ENCODE measurements at regions of chr16 and their contacts with region 1.

Region 1: GRCh38 chr16:81006814-81007696 is at the starts of genes CENPN and CMC2:
- DNase-seq: peak; percentile 96 to 99 (median 98)
- ATAC-seq: peak; percentile 77
- H3K4me3 ChIP-seq: peak within 1 kb of the TSS; percentile 79
- H3K4me3 Mint-ChIP-seq: peak within 1 kb of the TSS; percentile 90
- H3K27ac ChIP-seq: peak within 1 kb of the TSS; percentile 94 to 99
- H3K27ac Mint-ChIP-seq: peak within 1 kb of the TSS; percentile 99
- H3K4me1 ChIP-seq: peaks cover 39% of the 10 kb centered on the region
- H3K4me1 Mint-ChIP-seq: peaks cover 46% of the 10 kb centered on the region
- H3K27me3 ChIP-seq: no peaks in the 10 kb centered on the region
- H3K27me3 Mint-ChIP-seq: no peaks in the 10 kb centered on the region
- CTCF ChIP-seq: no peak
- total RNA-seq, gene CENPN: 8.7 to 9.7 TPM
- total RNA-seq, gene CMC2: 67.7 to 68.8 TPM

Region 2: DNA sequence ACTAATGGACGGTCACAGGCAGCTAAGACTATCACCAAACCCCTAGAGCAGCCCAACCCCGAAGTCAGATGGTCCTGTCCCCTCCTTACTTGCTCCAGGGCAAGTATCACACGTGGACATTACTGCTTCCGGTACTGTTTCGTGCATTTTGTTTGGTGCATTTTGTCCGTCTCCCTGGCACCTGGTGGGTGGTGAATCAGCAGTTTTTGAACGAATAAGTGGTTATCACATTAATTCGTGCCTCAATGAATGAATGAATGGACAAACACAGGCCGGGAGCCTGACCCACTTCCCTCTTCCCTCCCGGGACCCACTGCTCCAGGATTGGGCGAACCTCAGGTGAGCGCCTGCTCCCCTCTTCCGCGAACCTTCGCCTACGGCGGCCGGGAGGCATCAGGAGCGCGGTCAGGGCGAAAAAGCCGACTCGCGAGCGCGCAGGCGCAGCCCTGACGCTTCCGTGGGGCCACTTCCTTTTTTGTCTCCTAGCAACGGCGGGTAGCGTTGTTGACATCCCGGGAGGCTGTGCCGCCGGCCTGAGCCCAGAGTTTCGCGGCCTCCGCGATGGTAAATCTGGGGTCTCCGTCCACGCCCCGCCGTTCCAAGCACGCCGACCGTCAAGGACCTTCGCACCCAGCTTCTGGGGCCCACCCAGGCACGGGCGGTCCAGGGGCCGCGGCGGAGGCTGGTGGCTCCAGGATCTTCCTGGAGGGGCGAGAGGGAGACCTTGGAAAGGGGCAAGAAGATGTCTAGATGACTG is 466.4 kb before region 1 on chr16 and contains the start of gene DYNLRB2:
- CTCF ChIA-PET with region 1: no interaction called
- POLR2A ChIA-PET with region 1: no interaction called
- intact Hi-C with region 1: loop called in 1 of 2 experiments (anchors 10 kb)
- DNase-seq: peak; percentile 85 to 97 (median 89)
- ATAC-seq: peak; percentile 91
- H3K4me3 ChIP-seq: peak within 1 kb of the TSS; percentile 62
- H3K4me3 Mint-ChIP-seq: peak within 1 kb of the TSS; percentile 93
- H3K27ac ChIP-seq: peak within 1 kb of the TSS; percentile 36 to 62
- H3K27ac Mint-ChIP-seq: peak within 1 kb of the TSS; percentile 94
- H3K4me1 ChIP-seq: peaks cover 11% of the 10 kb centered on the region
- H3K4me1 Mint-ChIP-seq: peaks cover 17% of the 10 kb centered on the region
- H3K27me3 ChIP-seq: no peaks in the 10 kb centered on the region
- H3K27me3 Mint-ChIP-seq: peaks cover 4% of the 10 kb centered on the region
- CTCF ChIP-seq: no peak
- total RNA-seq, gene DYNLRB2: 0.31 TPM in 1 of 2 experiments, not detected in the other

Region 3: DNA sequence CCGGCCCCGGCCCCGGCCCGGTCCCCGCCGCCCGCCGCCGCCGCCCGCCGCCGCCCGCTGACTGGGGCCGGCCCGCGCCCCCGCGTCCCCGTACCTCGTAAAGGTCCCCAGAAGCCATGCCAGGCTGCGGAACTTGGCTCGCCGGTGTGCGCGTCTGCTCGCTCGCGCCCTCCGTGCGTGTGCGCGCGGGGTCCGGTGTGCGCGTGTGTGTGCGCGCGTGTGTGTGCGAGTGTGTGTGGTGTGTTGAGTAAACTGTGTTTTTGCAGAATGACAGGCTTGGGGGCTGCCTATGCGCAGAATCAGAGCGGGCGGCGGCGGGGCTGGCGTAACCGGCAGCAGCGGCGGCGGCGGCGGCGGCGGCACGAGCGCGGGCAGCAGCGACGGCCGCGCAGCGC is 203.0 kb before region 1 on chr16:
- CTCF ChIA-PET with region 1: no interaction called
- POLR2A ChIA-PET with region 1: no interaction called
- intact Hi-C with region 1: loop called in 1 of 2 experiments (anchors 10 kb)
- DNase-seq: peak; percentile 36 to 80 (median 59)
- ATAC-seq: peak; percentile 58
- H3K4me3 ChIP-seq: peak overlapping the region; percentile 57
- H3K4me3 Mint-ChIP-seq: peak overlapping the region; percentile 96
- H3K27ac ChIP-seq: no peak overlapping the region
- H3K27ac Mint-ChIP-seq: peak overlapping the region; percentile 71
- H3K4me1 ChIP-seq: peaks cover 20% of the 10 kb centered on the region
- H3K4me1 Mint-ChIP-seq: peaks cover 16% of the 10 kb centered on the region
- H3K27me3 ChIP-seq: no peaks in the 10 kb centered on the region
- H3K27me3 Mint-ChIP-seq: no peaks in the 10 kb centered on the region
- CTCF ChIP-seq: no peak

Region 4: DNA sequence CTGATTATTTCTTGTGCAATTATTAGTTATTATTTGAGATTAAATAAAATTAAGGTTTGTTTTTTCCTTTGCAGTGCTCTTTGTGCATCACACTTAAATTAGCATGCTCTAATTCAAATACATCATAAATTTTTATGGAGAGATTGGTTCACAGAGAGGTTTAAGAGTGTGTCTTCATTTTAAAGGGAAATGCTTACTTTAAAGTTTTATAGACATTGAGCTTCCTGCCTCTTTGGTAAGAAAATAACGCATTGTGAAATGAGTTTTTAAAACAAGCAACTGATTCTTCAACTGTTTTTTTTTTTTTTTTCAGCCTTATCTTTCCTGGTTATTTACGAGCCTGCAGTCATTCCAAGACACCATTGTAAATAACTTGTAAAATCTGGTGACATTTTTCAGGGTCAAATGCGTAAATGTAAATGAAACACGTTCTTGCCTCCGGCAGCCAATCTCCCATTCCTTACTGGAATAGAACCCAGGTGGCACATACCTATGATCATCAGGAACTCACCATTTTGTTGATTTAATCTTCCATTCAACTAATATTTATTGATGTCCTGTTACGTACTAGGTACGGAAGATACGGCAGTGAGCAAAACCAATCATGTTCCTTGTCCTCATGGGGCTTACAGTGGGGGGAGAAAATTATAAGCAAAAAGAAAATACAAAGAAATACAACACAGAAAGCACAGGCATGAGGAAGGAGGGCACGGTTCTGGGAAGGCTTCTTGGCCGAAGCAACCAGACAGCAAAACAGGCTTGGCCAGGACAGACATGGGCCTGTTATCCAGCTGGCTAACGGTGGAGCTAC is 169.4 kb before region 1 on chr16:
- CTCF ChIA-PET with region 1: no interaction called
- POLR2A ChIA-PET with region 1: no interaction called
- intact Hi-C with region 1: no loop called
- DNase-seq: no peak
- ATAC-seq: no peak
- H3K4me3 ChIP-seq: no peak overlapping the region
- H3K4me3 Mint-ChIP-seq: no peak overlapping the region
- H3K27ac ChIP-seq: no peak overlapping the region
- H3K27ac Mint-ChIP-seq: no peak overlapping the region
- H3K4me1 ChIP-seq: no peaks in the 10 kb centered on the region
- H3K4me1 Mint-ChIP-seq: no peaks in the 10 kb centered on the region
- H3K27me3 ChIP-seq: peaks cover 5 to 16% of the 10 kb centered on the region in 2 experiments
- H3K27me3 Mint-ChIP-seq: peaks cover 57% of the 10 kb centered on the region
- CTCF ChIP-seq: no peak

Region 5: DNA sequence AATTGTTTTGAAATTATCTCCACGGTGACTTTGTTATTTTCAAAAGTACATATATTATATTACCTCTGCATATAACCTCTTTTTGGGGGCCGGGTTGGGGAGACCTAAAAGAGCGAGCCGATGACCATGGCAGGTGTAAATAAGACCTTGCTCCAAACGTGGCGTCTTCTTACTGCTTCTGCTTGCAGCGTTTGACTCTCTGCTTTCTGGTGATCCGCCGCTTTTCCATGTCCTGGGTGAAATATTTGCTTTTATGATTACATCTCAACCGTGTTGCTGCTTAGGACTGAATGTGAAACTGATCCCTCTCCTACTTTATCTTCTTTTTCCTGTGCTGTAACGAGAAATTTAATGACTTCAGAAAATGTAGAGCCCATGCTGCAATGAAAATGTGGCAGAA is 46.7 kb after region 1 on chr16:
- CTCF ChIA-PET with region 1: no interaction called
- POLR2A ChIA-PET with region 1: no interaction called
- intact Hi-C with region 1: no loop called
- DNase-seq: no peak
- ATAC-seq: no peak
- H3K4me3 ChIP-seq: no peak overlapping the region
- H3K4me3 Mint-ChIP-seq: no peak overlapping the region
- H3K27ac ChIP-seq: no peak overlapping the region
- H3K27ac Mint-ChIP-seq: no peak overlapping the region
- H3K4me1 ChIP-seq: no peaks in the 10 kb centered on the region
- H3K4me1 Mint-ChIP-seq: no peaks in the 10 kb centered on the region
- H3K27me3 ChIP-seq: no peaks in the 10 kb centered on the region
- H3K27me3 Mint-ChIP-seq: no peaks in the 10 kb centered on the region
- CTCF ChIP-seq: no peak

Region 6: GRCh38 chr16:81077076-81077940 is 70.3 kb after region 1 on chr16 and contains the start of gene C16orf46:
- CTCF ChIA-PET with region 1: no interaction called
- POLR2A ChIA-PET with region 1: interaction called, 39 read pairs
- intact Hi-C with region 1: loop called (anchors 1 to 2 kb)
- DNase-seq: peak; percentile 93 to 99 (median 96)
- ATAC-seq: peak; percentile 68
- H3K4me3 ChIP-seq: peak within 1 kb of the TSS; percentile 90
- H3K4me3 Mint-ChIP-seq: no peak within 1 kb of the TSS
- H3K27ac ChIP-seq: peak within 1 kb of the TSS; percentile 95 to 97
- H3K27ac Mint-ChIP-seq: no peak within 1 kb of the TSS
- H3K4me1 ChIP-seq: peaks cover 15% of the 10 kb centered on the region
- H3K4me1 Mint-ChIP-seq: no peaks in the 10 kb centered on the region
- H3K27me3 ChIP-seq: no peaks in the 10 kb centered on the region
- H3K27me3 Mint-ChIP-seq: no peaks in the 10 kb centered on the region
- CTCF ChIP-seq: no peak
- total RNA-seq, gene C16orf46: 0.55 TPM in 1 of 2 experiments, not detected in the other

Region 7: GRCh38 chr16:81095953-81096717 is 89.1 kb after region 1 on chr16 and contains the start of gene GCSH:
- CTCF ChIA-PET with region 1: no interaction called
- POLR2A ChIA-PET with region 1: interaction called, 4 read pairs
- intact Hi-C with region 1: loop called (anchors 1 kb)
- DNase-seq: peak; percentile 95 to 100 (median 98)
- ATAC-seq: peak; percentile 96
- H3K4me3 ChIP-seq: peak within 1 kb of the TSS; percentile 74
- H3K4me3 Mint-ChIP-seq: peak within 1 kb of the TSS; percentile 96
- H3K27ac ChIP-seq: peak within 1 kb of the TSS in 1 of 2 donors; percentile 16
- H3K27ac Mint-ChIP-seq: peak within 1 kb of the TSS; percentile 77
- H3K4me1 ChIP-seq: peaks cover 17% of the 10 kb centered on the region
- H3K4me1 Mint-ChIP-seq: peaks cover 17% of the 10 kb centered on the region
- H3K27me3 ChIP-seq: no peaks in the 10 kb centered on the region
- H3K27me3 Mint-ChIP-seq: no peaks in the 10 kb centered on the region
- CTCF ChIP-seq: no peak
- total RNA-seq, gene GCSH: 2.3 to 3.2 TPM

Region 8: DNA sequence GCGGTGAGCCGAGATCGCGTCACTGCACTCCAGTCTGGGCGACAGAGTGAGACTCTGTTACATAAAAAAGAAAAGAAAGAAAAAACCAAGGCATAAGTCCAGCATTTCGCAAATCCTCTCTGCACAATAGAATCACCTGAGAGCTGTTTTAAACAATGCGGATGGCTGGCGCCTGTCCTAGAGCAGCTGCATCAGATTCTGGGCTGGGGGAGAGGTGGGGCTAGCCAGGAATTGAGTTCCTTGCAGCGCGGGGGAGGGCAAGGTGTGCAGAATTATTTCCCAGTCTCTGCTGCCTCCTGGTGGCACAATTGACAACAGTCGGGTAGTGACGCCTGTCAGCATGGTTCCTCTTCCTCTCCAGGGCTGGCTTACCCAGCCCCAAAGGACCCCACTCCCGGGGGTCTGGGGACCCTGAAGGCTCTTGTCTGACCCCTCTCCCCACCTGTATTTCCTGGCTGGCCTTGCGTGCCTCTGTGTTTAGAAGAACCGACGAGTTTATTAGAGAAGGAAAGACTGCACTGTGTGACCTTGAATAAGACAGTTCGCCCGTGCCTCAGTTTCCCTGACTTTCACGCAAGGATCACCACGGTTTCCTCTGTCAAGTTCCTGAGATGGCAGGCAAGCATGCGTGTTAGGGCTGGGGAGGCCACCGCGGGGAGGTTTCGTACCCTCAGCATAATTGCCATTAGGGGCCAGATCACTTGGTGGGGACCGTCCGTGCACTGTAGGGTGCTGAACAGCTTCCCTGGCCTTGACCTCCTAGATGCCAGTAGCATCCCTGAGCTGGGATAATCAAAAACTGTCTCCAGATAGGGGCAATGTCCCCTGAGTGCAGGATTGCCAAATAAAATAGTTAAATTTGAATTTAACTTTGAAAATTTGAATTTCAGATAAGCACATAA is 731.1 kb after region 1 on chr16:
- CTCF ChIA-PET with region 1: no interaction called
- POLR2A ChIA-PET with region 1: no interaction called
- intact Hi-C with region 1: loop called in 1 of 2 experiments (anchors 5 kb)
- DNase-seq: peak; percentile 78 to 93 (median 85)
- ATAC-seq: peak; percentile 98
- H3K4me3 ChIP-seq: peak overlapping the region; percentile 29
- H3K4me3 Mint-ChIP-seq: peak overlapping the region; percentile 72
- H3K27ac ChIP-seq: no peak overlapping the region
- H3K27ac Mint-ChIP-seq: peak overlapping the region; percentile 47
- H3K4me1 ChIP-seq: peaks cover 24% of the 10 kb centered on the region
- H3K4me1 Mint-ChIP-seq: peaks cover 8% of the 10 kb centered on the region
- H3K27me3 ChIP-seq: no peaks in the 10 kb centered on the region
- H3K27me3 Mint-ChIP-seq: no peaks in the 10 kb centered on the region
- CTCF ChIP-seq: peak; percentile 91